GM12878 (cell line): ENCODE measurements at regions of chr12 and their contacts with region 1.

Region 1: DNA sequence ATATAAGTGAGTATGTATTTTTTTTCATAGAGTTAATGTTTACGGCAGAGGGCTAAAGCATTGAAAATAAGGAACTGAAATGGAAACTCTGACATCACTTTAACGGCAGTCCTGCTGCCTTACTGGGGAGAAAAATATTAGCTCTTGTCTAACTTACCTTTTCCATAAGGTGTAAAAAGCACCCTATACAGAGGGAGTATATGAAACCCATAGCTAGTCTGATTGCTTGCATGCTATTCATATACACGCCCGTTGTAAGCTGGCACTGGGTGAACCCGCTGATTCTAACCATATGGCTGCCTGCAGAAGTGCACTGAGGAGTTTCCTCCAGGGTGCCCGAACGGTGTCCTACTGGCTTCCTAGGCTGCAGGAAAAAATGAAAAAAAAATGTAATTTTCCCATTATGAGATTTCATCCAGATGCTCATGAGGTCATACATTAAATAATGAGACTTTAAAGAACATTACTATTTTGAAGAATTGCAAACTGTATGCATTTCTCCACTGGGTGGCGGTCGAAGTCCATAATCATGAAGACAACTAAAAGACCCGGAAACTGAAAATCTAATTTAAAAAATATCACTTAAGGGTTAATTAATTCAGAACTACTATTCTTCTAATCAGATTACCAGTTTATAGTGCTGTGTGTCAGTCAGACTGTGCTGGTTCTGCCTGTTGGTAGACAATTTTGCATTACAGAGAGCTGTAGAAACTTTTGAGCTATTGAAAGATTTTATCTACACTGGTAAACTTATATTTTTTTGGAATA is 144.7 kb downstream of the ALX1 start:
- DNase-seq: peak; percentile 15
- ATAC-seq: peak; percentile 91
- H3K4me3 ChIP-seq: no peak overlapping the region
- H3K27ac ChIP-seq: no peak overlapping the region
- H3K4me1 ChIP-seq: no peaks in the 10 kb centered on the region
- H3K27me3 ChIP-seq: no peaks in the 10 kb centered on the region
- CTCF ChIP-seq: peak; percentile 43 to 54 (median 53)
- EP300 ChIP-seq: peak in 1 of 2 experiments; percentile 90; a peak in 1 of 4 replicates
- POLR2A ChIP-seq: no peak
- RAD21 ChIP-seq: peak; percentile 70

Region 2: DNA sequence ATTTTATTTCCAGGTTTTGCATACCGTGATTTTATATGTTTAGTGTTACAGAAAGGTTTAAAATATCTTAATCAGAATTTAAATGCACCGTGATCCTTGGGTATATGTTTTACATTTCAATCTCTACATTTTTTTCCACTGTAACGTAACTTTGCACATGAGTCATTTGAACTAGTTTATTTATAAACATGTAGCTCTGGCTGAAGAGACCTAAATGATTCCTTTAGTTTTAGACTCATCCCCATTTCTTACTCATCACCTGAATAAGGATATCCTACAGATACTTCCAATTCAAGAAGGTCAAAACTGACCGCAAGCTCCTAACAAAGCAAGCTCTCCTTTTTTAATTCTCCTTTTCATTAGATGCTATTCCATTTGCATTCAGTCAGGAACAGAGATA is 469.5 kb before region 1 on chr12:
- CTCF ChIA-PET with region 1: no interaction called
- POLR2A ChIA-PET with region 1: no interaction called
- RAD21 ChIA-PET with region 1: no interaction called
- SMC1A ChIA-PET with region 1: no interaction called
- in situ Hi-C with region 1: no loop called
- intact Hi-C with region 1: no loop called
- DNase-seq: no peak
- ATAC-seq: no peak
- H3K4me3 ChIP-seq: no peak overlapping the region
- H3K27ac ChIP-seq: no peak overlapping the region
- H3K4me1 ChIP-seq: no peaks in the 10 kb centered on the region
- H3K27me3 ChIP-seq: no peaks in the 10 kb centered on the region; a peak in 1 of 4 replicates
- CTCF ChIP-seq: no peak
- EP300 ChIP-seq: no peak
- POLR2A ChIP-seq: no peak
- RAD21 ChIP-seq: no peak

Region 3: GRCh38 chr12:85405781-85406522 is 18.8 kb before region 1 on chr12:
- CTCF ChIA-PET with region 1: interaction called, 23 read pairs
- POLR2A ChIA-PET with region 1: interaction called, 3 read pairs
- RAD21 ChIA-PET with region 1: interaction called, 5 read pairs
- SMC1A ChIA-PET with region 1: interaction called, 4 read pairs
- in situ Hi-C with region 1: no loop called
- intact Hi-C with region 1: no loop called
- DNase-seq: no peak
- ATAC-seq: no peak
- H3K4me3 ChIP-seq: no peak overlapping the region
- H3K27ac ChIP-seq: no peak overlapping the region
- H3K4me1 ChIP-seq: no peaks in the 10 kb centered on the region
- H3K27me3 ChIP-seq: no peaks in the 10 kb centered on the region
- CTCF ChIP-seq: no peak
- EP300 ChIP-seq: no peak
- POLR2A ChIP-seq: no peak
- RAD21 ChIP-seq: no peak

Region 4: DNA sequence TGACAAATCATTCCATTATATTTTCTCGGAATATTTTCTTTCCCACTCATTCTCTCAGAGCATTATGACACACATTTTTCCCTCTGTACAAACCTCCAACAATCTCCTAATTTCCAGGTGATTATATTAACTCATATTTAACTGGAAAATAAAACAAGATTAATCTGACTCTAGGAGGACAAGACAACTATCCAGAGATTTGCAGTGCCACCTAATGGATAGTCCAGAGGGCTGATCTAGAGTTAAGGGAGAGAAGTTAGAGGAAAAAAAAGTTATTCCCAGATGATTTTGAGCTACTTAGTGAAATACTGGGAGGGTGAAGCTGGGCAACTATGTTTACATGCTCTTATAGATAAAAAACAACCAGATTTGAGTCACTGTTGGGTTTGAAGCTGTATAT is 17.0 kb after region 1 on chr12:
- CTCF ChIA-PET with region 1: interaction called, 30 read pairs
- POLR2A ChIA-PET with region 1: interaction called, 4 read pairs
- RAD21 ChIA-PET with region 1: interaction called, 17 read pairs
- SMC1A ChIA-PET with region 1: interaction called, 22 read pairs
- in situ Hi-C with region 1: no loop called
- intact Hi-C with region 1: no loop called
- DNase-seq: no peak
- ATAC-seq: no peak
- H3K4me3 ChIP-seq: no peak overlapping the region
- H3K27ac ChIP-seq: no peak overlapping the region
- H3K4me1 ChIP-seq: no peaks in the 10 kb centered on the region
- H3K27me3 ChIP-seq: peaks cover 0 to 3% of the 10 kb centered on the region in 2 experiments; a peak in 1 of 4 replicates
- CTCF ChIP-seq: peak in 1 of 3 experiments; percentile 27; a peak in 2 of 6 replicates
- EP300 ChIP-seq: no peak
- POLR2A ChIP-seq: no peak
- RAD21 ChIP-seq: peak; percentile 48; the same call in 1 of the 2 replicates

Region 5: DNA sequence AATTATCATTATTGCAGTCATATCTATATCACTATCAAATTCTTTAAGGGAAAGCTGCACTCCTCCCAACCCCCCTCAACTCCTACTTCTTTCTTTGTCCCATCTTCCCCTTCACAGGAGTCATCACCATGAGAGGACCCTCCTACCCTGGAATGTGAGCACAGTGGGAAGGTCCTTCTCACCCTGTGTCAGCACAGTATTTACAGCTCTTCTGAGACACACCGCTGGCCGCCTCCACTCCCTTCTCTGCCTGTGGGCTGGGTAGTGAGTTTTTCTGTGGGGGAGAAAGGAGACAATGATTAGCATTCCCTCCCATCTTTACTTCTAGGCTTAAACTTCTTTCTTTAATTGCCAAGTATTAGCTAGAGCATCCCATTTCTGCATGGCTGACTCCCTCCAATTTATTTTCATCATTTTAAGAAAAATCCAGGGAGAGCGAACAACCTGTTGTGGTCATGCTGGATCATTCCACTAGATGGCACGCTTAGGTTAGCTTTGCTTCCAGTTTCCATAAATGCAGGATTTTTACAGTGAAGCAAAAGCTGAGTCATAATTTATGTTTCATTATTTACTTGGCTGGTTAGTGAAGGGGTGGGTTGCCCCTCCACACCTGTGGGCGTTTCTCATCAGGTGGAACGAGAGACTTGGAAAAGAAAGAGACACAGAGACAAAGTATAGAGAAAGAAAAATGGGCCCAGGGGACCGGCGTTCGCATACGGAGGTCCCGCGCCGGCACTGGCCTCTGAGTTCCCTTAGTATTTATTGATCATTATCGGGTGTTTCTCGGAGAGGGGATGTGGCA is 43.8 kb after region 1 on chr12:
- CTCF ChIA-PET with region 1: interaction called, 35 read pairs
- POLR2A ChIA-PET with region 1: no interaction called
- RAD21 ChIA-PET with region 1: interaction called, 16 read pairs
- SMC1A ChIA-PET with region 1: interaction called, 17 read pairs
- in situ Hi-C with region 1: no loop called
- intact Hi-C with region 1: loop called (anchors 2 kb)
- DNase-seq: peak; percentile 23
- ATAC-seq: peak; percentile 95
- H3K4me3 ChIP-seq: peak overlapping the region; percentile 31; the same call in 1 of the 2 replicates
- H3K27ac ChIP-seq: no peak overlapping the region
- H3K4me1 ChIP-seq: 0 out of 2 replicates have a peak, but pooled peaks cover 2% of the 10 kb centered on the region
- H3K27me3 ChIP-seq: no peaks in the 10 kb centered on the region
- CTCF ChIP-seq: peak; percentile 69 to 86 (median 79)
- EP300 ChIP-seq: no peak
- POLR2A ChIP-seq: no peak
- RAD21 ChIP-seq: peak; percentile 98

Region 6: DNA sequence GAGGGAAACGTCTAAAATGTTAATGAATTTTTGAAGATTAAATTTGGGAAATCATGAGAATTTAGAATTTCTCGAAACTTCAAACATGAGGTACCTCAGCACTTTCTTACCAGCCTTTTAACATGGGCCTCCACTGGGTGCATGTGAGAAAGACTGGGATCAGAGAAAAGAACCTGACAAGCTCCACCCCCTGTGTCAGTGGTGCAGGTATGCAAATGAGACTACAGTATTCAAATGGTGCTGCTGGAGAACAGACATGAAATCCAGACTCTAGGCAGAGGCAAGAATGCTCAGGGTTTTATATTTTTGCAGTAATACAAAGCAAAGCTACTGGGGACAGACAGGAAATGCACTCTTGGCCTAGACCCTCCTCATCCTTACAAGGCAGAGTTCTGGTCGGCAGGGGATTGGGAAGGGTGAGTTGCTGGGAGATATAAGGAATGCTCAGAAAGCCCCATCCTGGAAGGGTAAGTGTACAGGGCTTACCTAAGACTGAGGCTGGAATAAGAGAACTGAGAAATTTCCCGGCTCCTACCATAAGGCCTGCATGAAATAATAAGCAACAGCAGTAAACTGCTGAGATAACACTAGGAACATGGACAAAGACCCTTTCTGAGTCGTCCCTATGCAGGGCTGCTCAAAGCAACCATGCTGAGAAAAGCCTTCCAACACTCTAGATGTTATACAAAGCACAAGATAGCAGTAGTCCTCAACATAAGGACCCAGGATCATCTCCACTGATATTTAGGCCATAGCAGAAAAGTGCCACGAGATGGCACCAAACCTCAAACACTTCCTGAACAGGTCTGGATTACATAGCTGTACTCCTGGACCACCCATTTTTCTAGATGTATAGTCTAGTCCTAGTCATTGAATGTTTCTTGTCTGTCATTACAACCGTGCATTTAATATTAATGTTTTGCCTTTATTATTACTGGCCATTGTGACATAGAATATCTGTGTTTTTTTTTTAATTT is 150.6 kb after region 1 on chr12:
- CTCF ChIA-PET with region 1: interaction called, 11 read pairs
- POLR2A ChIA-PET with region 1: no interaction called
- RAD21 ChIA-PET with region 1: interaction called, 7 read pairs
- SMC1A ChIA-PET with region 1: interaction called, 3 read pairs
- in situ Hi-C with region 1: no loop called
- intact Hi-C with region 1: no loop called
- DNase-seq: peak; percentile 13
- ATAC-seq: peak; percentile 100
- H3K4me3 ChIP-seq: no peak overlapping the region
- H3K27ac ChIP-seq: no peak overlapping the region
- H3K4me1 ChIP-seq: no peaks in the 10 kb centered on the region
- H3K27me3 ChIP-seq: no peaks in the 10 kb centered on the region
- CTCF ChIP-seq: peak; percentile 68 to 74 (median 68)
- EP300 ChIP-seq: no peak
- POLR2A ChIP-seq: no peak
- RAD21 ChIP-seq: peak; percentile 76

Region 7: GRCh38 chr12:85872497-85873091 is 447.8 kb after region 1 on chr12:
- CTCF ChIA-PET with region 1: interaction called, 86 read pairs
- POLR2A ChIA-PET with region 1: no interaction called
- RAD21 ChIA-PET with region 1: interaction called, 30 read pairs
- SMC1A ChIA-PET with region 1: interaction called, 21 read pairs
- in situ Hi-C with region 1: no loop called
- intact Hi-C with region 1: loop called (anchors 1 kb)
- DNase-seq: no peak
- ATAC-seq: peak; percentile 83
- H3K4me3 ChIP-seq: no peak overlapping the region
- H3K27ac ChIP-seq: no peak overlapping the region
- H3K4me1 ChIP-seq: no peaks in the 10 kb centered on the region
- H3K27me3 ChIP-seq: no peaks in the 10 kb centered on the region
- CTCF ChIP-seq: peak; percentile 67 to 73 (median 70)
- EP300 ChIP-seq: no peak
- POLR2A ChIP-seq: no peak
- RAD21 ChIP-seq: peak; percentile 55